Mammary epithelial cell (primary cell): ENCODE measurements at regions of chr11 and their contacts with region 1.

Region 1: DNA sequence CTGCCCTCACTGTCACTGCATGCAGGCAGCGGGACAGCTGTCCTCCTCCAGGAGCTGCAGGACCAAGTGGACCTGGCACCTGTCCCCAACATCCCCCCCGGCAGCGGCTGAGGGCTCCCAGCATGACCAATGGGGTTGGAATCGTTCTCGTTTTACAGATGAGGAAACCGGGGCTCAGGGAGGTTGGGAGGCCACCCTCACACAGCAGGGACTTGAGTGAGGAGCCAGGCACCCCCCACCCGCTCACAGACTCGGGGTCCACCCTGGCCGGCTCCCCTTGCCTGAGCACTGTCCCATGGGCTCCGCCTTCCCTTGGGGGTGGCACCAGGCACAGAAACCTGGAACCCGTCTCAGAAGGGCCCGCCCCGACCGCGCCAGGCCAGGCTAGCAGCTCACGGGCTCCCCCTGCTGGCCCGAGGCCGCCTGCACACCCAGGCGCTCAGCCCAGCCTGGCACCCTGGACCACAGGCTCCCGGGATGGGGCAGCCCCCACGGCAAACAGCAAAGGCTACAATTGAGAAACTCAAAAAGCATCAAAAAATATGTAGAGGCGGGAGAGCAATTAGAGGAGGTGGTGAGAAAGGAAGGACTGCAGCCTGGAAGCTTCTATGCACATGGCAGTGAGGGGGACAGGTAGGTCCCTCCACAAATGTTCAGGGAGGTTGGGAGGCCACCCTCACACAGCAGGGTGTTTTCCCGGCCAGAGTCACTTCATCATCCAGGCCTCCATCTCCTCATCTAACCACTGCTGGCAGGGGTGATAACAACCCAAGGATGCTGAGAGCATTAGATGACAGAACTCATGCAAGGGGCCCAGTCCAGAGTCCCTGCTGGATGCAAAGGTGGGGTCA is 12.8 kb downstream of the MACROD1 start:
- DNase-seq: peak; percentile 29
- H3K4me3 ChIP-seq: peak overlapping the region in 2 of 3 experiments; percentile 7 to 17
- H3K27ac ChIP-seq: no peak overlapping the region
- H3K4me1 ChIP-seq: peaks cover 4% of the 10 kb centered on the region
- H3K27me3 ChIP-seq: no peaks in the 10 kb centered on the region
- CTCF ChIP-seq: peak; percentile 87 to 99

Region 2: GRCh38 chr11:63945477-63946163 is 207.4 kb before region 1 on chr11:
- CTCF ChIA-PET with region 1: interaction called, 5 read pairs
- dilution Hi-C with region 1: no loop called
- in situ Hi-C with region 1: no loop called
- intact Hi-C with region 1: loop called (anchors 1 kb)
- DNase-seq: peak; percentile 64
- H3K4me3 ChIP-seq: no peak overlapping the region
- H3K27ac ChIP-seq: no peak overlapping the region
- H3K4me1 ChIP-seq: peaks cover 3% of the 10 kb centered on the region
- H3K27me3 ChIP-seq: no peaks in the 10 kb centered on the region
- CTCF ChIP-seq: peak; percentile 54 to 68

Region 3: GRCh38 chr11:64000026-64000739 is 152.9 kb before region 1 on chr11:
- CTCF ChIA-PET with region 1: interaction called, 6 read pairs
- dilution Hi-C with region 1: no loop called
- in situ Hi-C with region 1: loop called in 1 of 2 experiments (anchors 10 kb)
- intact Hi-C with region 1: loop called (anchors 1 kb)
- DNase-seq: peak; percentile 35
- H3K4me3 ChIP-seq: peak overlapping the region in 1 of 3 experiments; percentile 30
- H3K27ac ChIP-seq: no peak overlapping the region
- H3K4me1 ChIP-seq: peaks cover 29% of the 10 kb centered on the region
- H3K27me3 ChIP-seq: no peaks in the 10 kb centered on the region
- CTCF ChIP-seq: peak; percentile 29 to 65

Region 4: GRCh38 chr11:64036087-64037026 is 116.7 kb before region 1 on chr11:
- CTCF ChIA-PET with region 1: no interaction called
- dilution Hi-C with region 1: no loop called
- in situ Hi-C with region 1: no loop called
- intact Hi-C with region 1: loop called (anchors 2 kb)
- DNase-seq: peak; percentile 16
- H3K4me3 ChIP-seq: peak overlapping the region in 1 of 3 experiments; percentile 28
- H3K27ac ChIP-seq: no peak overlapping the region
- H3K4me1 ChIP-seq: peaks cover 4% of the 10 kb centered on the region
- H3K27me3 ChIP-seq: peaks cover 33% of the 10 kb centered on the region
- CTCF ChIP-seq: no peak

Region 5: GRCh38 chr11:64088162-64089026 is 64.7 kb before region 1 on chr11:
- CTCF ChIA-PET with region 1: no interaction called
- dilution Hi-C with region 1: no loop called
- in situ Hi-C with region 1: no loop called
- intact Hi-C with region 1: loop called (anchors 1 kb)
- DNase-seq: no peak
- H3K4me3 ChIP-seq: no peak overlapping the region
- H3K27ac ChIP-seq: no peak overlapping the region
- H3K4me1 ChIP-seq: peaks cover 6% of the 10 kb centered on the region
- H3K27me3 ChIP-seq: no peaks in the 10 kb centered on the region
- CTCF ChIP-seq: peak; percentile 21 to 52

Region 6: GRCh38 chr11:64173616-64174355 is 20.7 kb after region 1 on chr11:
- CTCF ChIA-PET with region 1: no interaction called
- dilution Hi-C with region 1: no loop called
- in situ Hi-C with region 1: no loop called
- intact Hi-C with region 1: no loop called
- DNase-seq: no peak
- H3K4me3 ChIP-seq: no peak overlapping the region
- H3K27ac ChIP-seq: no peak overlapping the region
- H3K4me1 ChIP-seq: no peaks in the 10 kb centered on the region
- H3K27me3 ChIP-seq: no peaks in the 10 kb centered on the region
- CTCF ChIP-seq: no peak

Region 7: GRCh38 chr11:64506731-64507130 is 353.7 kb after region 1 on chr11:
- CTCF ChIA-PET with region 1: no interaction called
- dilution Hi-C with region 1: no loop called
- in situ Hi-C with region 1: no loop called
- intact Hi-C with region 1: no loop called
- DNase-seq: no peak
- H3K4me3 ChIP-seq: no peak overlapping the region
- H3K27ac ChIP-seq: no peak overlapping the region
- H3K4me1 ChIP-seq: no peaks in the 10 kb centered on the region
- H3K27me3 ChIP-seq: no peaks in the 10 kb centered on the region
- CTCF ChIP-seq: no peak

Region 8: DNA sequence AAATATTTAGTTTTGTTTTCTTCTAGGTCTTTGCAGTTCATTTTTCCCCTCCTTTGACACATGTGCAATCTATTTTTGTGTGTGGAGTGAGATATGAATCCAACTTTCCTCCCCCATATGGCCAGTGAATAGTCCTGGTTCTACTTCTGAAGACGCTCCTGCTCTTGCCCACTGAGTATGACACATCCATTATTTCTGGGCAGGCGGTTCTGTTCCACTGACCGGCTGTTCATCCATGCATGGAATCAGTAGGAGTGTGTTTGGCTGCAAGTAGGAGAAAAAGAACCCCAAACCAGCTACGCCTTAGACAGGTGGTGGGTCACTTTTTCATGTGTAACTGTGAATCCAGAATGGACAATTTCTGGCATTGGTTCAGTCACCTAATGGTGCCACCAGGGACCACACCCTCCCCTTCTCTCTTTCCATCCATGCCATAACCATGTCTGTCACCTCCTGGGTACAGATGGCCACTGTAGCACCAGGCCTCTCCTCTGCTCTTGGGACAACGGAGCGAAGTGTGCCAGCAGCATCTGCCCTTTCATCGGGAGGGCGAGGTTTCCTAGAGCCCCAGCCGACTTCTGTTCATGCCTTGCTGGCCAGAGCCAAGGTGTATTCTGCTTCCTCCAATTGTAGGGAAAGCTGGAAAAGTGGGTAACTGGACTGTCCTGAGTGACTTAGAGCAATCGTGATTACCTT is 370.5 kb after region 1 on chr11:
- CTCF ChIA-PET with region 1: no interaction called
- dilution Hi-C with region 1: no loop called
- in situ Hi-C with region 1: no loop called
- intact Hi-C with region 1: no loop called
- DNase-seq: no peak
- H3K4me3 ChIP-seq: no peak overlapping the region
- H3K27ac ChIP-seq: no peak overlapping the region
- H3K4me1 ChIP-seq: peaks cover 5% of the 10 kb centered on the region
- H3K27me3 ChIP-seq: no peaks in the 10 kb centered on the region
- CTCF ChIP-seq: no peak